Breast epithelium (tissue), 4 donors: ENCODE measurements at regions of chr1 and their contacts with region 1.

Region 1: DNA sequence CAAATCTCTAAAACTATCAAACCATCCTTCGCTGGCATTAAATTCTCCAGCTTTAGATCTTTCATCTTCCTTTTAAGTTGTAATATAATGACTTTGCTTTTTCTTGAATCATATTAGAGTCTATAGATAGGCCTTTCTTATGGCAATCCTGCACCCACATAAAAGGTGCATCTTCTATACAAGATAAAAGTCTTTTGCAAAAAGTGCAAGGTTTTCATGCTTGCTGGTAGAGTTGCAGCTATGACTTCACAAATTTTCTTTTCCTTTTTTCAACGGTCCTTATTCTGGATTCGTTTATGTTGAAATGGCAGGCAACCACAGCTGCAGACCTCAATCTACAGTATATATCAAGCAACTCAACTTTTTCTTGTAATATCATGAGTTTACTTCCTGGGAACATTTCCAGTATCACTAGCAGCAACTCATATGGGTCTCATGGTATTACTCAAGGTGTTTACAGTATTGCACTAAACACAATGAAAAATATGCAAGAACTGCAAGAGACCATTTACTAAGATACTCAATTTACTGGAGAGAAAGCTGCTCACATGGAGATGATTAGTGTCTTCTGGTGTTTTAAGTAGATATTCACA is 22.1 kb downstream of the OMA1 start:
- DNase-seq: no peak
- H3K4me3 ChIP-seq: no peak overlapping the region
- H3K27ac ChIP-seq: no peak overlapping the region
- H3K4me1 ChIP-seq: no peaks in the 10 kb centered on the region
- H3K27me3 ChIP-seq: no peaks in the 10 kb centered on the region
- CTCF ChIP-seq: no peak
- POLR2A ChIP-seq: no peak

Region 2: GRCh38 chr1:58652651-58653184 is 128.3 kb after region 1 on chr1:
- intact Hi-C with region 1: loop called (anchors 5 kb)
- DNase-seq: peak in 1 of 2 donors; percentile 60
- H3K4me3 ChIP-seq: no peak overlapping the region
- H3K27ac ChIP-seq: peak overlapping the region in 1 of 2 donors; percentile 45
- H3K4me1 ChIP-seq: no peaks in the 10 kb centered on the region
- H3K27me3 ChIP-seq: no peaks in the 10 kb centered on the region
- CTCF ChIP-seq: peak; percentile 66 to 89 (median 87)
- POLR2A ChIP-seq: no peak